ENCODE measurements at regions of chr2 and their contacts with region 1.

Region 1: GRCh38 chr2:70142590-70143313 is 48.1 kb downstream of the C2orf42 start:
- DNase-seq: peak; percentile 95 to 100 (median 100)
- ATAC-seq: peak; percentile 78 to 81
- H3K4me3 Mint-ChIP-seq: peak overlapping the region; percentile 78 to 96 (median 91)
- H3K27ac Mint-ChIP-seq: peak overlapping the region; percentile 96 to 100 (median 98)
- H3K4me1 Mint-ChIP-seq: peaks cover 34 to 64% (median 59%) of the 10 kb centered on the region in 4 donors
- H3K27me3 Mint-ChIP-seq: peaks cover 0 to 3% (median 0%) of the 10 kb centered on the region in 5 donors

Region 2: DNA sequence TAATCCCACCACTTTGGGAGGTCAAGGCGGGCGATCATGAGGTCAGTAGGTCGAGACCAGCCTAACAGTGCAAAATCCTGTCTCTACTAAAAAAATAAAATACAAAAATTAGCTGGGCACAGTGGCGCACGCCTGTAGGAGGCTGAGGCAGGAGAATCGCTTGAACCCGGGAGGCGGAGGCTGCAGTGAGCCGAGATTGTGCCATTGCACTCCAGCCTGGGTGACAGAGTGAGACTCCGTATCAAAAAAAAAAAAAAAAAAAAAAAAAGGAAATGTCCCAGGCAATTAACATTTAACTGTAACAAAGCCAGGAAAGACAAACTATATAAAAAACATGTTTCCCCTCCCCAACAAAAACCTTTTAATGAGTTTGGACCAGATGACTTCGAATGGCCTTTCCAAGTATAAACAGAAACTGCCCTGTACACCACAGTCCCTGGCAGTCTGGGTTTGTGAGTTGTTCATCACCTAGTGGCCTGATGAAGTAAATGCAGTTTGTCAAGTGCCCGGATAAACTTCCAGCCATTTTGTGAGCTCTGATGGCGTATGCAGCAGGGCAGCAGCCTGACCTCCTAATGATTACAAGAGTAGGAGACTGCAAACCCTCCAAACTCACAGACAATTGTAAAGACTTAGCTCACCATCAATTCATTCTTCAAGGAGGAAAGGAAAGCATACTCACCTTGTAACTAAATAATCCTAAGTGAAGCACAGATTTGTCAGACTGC is 72.0 kb before region 1 on chr2:
- POLR2A ChIA-PET with region 1: interaction called, 1,727 read pairs
- DNase-seq: peak in 9 of 10 donors; percentile 38 to 81 (median 65)
- ATAC-seq: peak; percentile 63 to 68
- H3K4me3 Mint-ChIP-seq: peak overlapping the region; percentile 54 to 86 (median 76)
- H3K27ac Mint-ChIP-seq: peak overlapping the region; percentile 86 to 100 (median 96)
- H3K4me1 Mint-ChIP-seq: peaks cover 17 to 57% (median 52%) of the 10 kb centered on the region in 4 donors
- H3K27me3 Mint-ChIP-seq: no peaks in the 10 kb centered on the region

Region 3: DNA sequence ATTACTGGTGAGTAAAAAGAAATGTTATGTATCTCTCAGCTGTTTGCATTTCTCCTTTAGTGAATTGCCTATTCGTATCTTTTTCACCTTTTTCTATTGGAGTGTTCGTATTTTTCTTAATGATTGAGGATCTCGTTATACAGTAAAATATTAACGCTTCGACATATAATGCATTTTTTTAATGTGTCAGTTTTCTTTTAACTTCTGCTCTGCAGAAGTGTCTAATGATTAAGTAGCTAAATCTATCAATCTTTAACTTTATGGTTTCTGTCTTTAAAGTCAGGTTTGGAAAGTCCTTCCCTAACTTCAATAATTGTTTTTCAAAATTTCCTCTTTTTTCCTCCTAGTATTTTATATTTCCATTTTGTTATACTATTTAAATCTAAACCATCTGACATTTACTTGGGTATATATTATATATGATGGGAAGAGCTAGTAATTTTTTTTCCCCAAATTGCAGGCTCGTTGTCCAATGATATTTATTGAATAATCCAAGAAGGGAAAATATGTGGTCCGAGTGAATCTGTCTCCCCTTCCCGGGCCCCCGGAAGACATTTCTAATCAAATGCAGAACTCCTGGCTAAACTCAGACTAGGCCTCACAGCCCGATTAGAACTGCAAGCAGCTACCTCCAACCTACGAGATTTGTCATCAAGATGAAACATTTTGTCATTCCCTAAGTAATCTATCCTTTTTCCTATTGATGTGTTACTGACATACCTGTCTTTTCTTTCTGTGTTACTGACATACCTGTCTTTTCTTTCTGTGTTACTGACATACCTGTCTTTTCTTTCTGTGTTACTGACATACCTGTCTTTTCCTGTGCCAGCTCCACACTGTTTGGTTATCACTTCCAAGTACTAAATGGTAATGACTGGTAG is 38.3 kb before region 1 on chr2:
- POLR2A ChIA-PET with region 1: interaction called, 302 read pairs
- DNase-seq: peak in 3 of 10 donors; percentile 45 to 69 (median 48)
- ATAC-seq: no peak
- H3K4me3 Mint-ChIP-seq: peak overlapping the region; percentile 76 to 89 (median 84)
- H3K27ac Mint-ChIP-seq: peak overlapping the region; percentile 91 to 99 (median 96)
- H3K4me1 Mint-ChIP-seq: peaks cover 32 to 59% (median 57%) of the 10 kb centered on the region in 4 donors
- H3K27me3 Mint-ChIP-seq: no peaks in the 10 kb centered on the region

Region 4: GRCh38 chr2:70124983-70125480 is 17.7 kb before region 1 on chr2:
- POLR2A ChIA-PET with region 1: interaction called, 600 read pairs
- DNase-seq: peak in 9 of 10 donors; percentile 49 to 84 (median 65)
- ATAC-seq: peak; percentile 63 to 71
- H3K4me3 Mint-ChIP-seq: peak overlapping the region; percentile 90 to 99 (median 97)
- H3K27ac Mint-ChIP-seq: peak overlapping the region; percentile 99 to 100 (median 100)
- H3K4me1 Mint-ChIP-seq: peaks cover 33 to 86% (median 81%) of the 10 kb centered on the region in 4 donors
- H3K27me3 Mint-ChIP-seq: no peaks in the 10 kb centered on the region

Region 5: GRCh38 chr2:70190418-70191243 is 47.9 kb after region 1 on chr2 and contains the start of gene C2orf42:
- POLR2A ChIA-PET with region 1: interaction called, 31 read pairs
- DNase-seq: peak; percentile 83 to 98 (median 96)
- ATAC-seq: peak; percentile 84 to 85
- H3K4me3 Mint-ChIP-seq: peak within 1 kb of the TSS; percentile 88 to 99 (median 96)
- H3K27ac Mint-ChIP-seq: peak within 1 kb of the TSS; percentile 96 to 100 (median 99)
- H3K4me1 Mint-ChIP-seq: peaks cover 9 to 25% (median 21%) of the 10 kb centered on the region in 4 donors
- H3K27me3 Mint-ChIP-seq: no peaks in the 10 kb centered on the region
- polyA plus RNA-seq, gene C2orf42: 19.6 to 31.1 (median 19.9) TPM

Measured in naive thymus-derived CD8-positive, alpha-beta T cell (primary cell).